Mammary epithelial cell (primary cell): ENCODE measurements at regions of chr6 and their contacts with region 1.

Region 1: DNA sequence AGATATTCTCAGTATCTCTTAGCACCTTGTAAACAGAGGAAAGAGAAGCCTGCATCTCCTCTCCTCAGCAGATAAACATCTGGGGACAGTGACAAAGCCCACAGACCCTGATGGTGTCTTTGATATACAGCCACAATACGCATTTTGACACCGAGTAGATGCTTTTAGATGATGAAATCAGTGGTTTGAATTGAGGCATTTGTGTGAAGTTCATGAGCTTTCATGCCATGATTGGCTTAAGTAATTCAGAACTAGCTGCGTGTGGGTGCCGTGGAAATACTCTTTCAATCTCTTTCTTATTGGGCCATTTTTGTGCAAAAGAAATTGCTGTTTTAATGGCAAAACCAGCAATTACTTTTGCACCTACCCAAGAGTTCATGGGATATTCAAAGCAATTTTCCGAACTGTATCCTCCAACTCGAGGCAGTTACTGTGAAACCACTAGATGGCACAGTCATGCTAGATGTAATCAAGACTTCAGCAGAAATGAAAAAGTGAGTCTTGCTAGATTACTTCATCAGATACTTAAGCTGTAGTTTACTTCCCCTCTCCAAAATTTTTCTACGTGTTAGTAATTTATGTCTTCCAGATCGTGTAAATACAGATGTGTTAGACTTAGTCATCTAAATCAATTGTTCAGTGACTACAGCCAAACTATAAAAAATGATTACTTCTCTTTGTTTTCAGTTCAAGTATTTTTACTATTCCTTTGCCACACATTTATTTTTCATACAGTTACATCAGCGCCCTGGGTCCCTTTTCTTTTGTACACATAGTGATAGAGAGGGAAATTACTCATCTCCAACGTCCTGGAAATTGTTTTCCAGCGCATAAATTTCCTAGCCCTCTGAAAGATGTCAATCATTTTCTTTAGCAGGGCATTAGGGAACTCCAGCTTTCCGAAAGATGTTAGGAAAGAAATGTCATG is 49.4 kb downstream of the IYD start:
- DNase-seq: peak; percentile 79
- H3K4me3 ChIP-seq: peak overlapping the region; percentile 24 to 51 (median 27)
- H3K27ac ChIP-seq: peak overlapping the region; percentile 69
- H3K4me1 ChIP-seq: peaks cover 5% of the 10 kb centered on the region
- H3K27me3 ChIP-seq: no peaks in the 10 kb centered on the region
- CTCF ChIP-seq: peak; percentile 85 to 93

Region 2: DNA sequence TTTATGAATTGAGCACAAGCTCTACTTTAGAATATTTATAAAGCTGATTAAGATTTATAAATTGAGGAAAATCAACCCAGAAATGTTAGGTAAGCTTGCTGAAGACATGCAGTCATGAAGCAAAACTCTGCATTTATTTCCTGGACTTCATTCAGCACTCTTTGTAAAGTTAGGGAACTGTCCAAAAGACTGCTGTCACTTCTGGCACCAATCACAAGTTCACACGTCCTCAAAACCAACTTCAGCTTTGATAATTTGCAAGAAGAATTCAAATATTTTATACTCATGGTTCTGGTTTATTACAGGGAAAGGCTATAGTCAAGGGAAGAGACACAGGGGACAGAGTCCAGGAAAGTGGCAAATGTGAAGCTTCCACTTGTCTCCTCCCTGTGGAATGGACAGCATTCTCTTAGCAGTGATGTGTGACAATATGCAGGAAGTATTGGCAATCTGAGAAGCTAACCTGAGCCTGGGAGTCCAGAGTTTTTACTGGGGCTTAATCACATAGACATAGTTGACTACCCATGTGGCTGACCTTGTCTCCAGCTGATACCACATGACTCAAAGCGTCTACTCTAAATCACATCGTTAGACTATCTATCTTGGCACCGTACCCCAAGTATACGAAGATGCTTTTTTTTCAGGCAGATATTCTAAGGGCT is 190.0 kb before region 1 on chr6:
- CTCF ChIA-PET with region 1: no interaction called
- dilution Hi-C with region 1: no loop called
- in situ Hi-C with region 1: no loop called
- intact Hi-C with region 1: no loop called
- DNase-seq: no peak
- H3K4me3 ChIP-seq: no peak overlapping the region
- H3K27ac ChIP-seq: no peak overlapping the region
- H3K4me1 ChIP-seq: peaks cover 38% of the 10 kb centered on the region
- H3K27me3 ChIP-seq: no peaks in the 10 kb centered on the region
- CTCF ChIP-seq: no peak

Region 3: GRCh38 chr6:150600301-150601017 is 182.3 kb after region 1 on chr6:
- CTCF ChIA-PET with region 1: interaction called, 6 read pairs
- dilution Hi-C with region 1: no loop called
- in situ Hi-C with region 1: loop called in 1 of 2 experiments (anchors 10 kb)
- intact Hi-C with region 1: loop called (anchors 1 kb)
- DNase-seq: peak; percentile 90
- H3K4me3 ChIP-seq: peak overlapping the region; percentile 69 to 81 (median 80)
- H3K27ac ChIP-seq: peak overlapping the region; percentile 47
- H3K4me1 ChIP-seq: peaks cover 15% of the 10 kb centered on the region
- H3K27me3 ChIP-seq: no peaks in the 10 kb centered on the region
- CTCF ChIP-seq: peak; percentile 53 to 79

Region 4: DNA sequence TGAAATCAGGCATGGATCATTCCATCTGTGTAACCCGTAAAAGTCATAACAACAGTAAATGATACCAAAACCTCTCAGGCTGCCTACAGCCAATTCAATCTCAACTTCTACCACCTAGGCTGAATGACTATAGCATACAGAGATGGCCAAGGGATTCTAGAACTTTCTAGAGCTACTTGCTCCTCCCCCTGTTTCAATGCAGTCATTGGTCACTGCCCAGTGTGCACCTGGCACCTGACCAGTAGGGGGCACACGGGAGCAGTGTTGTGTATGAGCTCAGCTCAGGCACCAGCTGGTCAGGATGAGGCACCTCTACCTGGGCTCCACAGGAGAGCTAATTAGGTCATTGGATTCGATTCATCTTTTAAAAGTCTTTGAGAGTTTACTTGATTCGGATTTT is 267.7 kb after region 1 on chr6:
- CTCF ChIA-PET with region 1: interaction called, 7 read pairs
- dilution Hi-C with region 1: no loop called
- in situ Hi-C with region 1: no loop called
- intact Hi-C with region 1: loop called (anchors 1 kb)
- DNase-seq: peak; percentile 72
- H3K4me3 ChIP-seq: no peak overlapping the region
- H3K27ac ChIP-seq: no peak overlapping the region
- H3K4me1 ChIP-seq: peaks cover 24% of the 10 kb centered on the region
- H3K27me3 ChIP-seq: no peaks in the 10 kb centered on the region
- CTCF ChIP-seq: peak; percentile 89 to 96

Region 5: DNA sequence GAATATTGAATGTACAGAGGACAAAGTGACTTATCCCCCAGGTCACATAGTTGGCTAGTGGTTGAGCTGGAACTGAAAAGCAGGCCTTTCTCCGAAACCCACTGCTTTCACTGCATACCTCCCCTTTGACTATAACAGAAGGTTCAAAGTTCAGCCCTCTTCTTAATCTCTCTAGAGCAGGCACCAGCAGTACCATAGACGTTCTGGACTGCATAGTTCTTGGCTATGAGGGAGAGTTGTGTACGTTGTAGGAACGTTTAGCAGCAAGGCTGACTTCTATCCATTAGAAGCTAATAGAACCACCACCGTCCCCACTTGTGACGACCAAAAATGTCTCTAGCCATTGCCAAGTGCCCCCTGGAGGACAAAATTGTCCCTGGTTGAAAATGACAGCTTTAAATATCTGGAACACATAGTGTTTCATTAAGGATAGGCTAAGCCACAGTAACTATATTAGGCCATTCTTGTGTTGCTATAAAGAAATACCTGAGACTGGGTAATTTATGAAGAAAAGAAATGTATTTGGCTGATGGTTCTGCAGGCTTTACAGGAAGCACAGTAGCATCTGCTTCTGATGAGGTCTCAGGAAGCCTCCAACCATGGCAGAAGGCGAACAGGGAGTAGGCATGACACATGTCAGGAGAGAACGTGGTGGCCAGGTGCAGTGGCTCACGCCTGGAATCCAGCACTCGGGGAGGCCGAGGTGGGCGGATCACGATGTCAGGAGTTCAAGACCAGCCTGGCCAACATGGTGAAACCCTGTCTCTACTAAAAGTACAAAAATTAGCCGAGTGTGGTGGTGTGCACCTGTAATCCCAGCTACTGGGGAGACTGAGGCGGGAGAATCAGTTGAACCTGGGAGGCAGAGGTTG is 323.7 kb after region 1 on chr6:
- CTCF ChIA-PET with region 1: interaction called, 3 read pairs
- dilution Hi-C with region 1: no loop called
- in situ Hi-C with region 1: no loop called
- intact Hi-C with region 1: loop called (anchors 2 kb)
- DNase-seq: no peak
- H3K4me3 ChIP-seq: no peak overlapping the region
- H3K27ac ChIP-seq: no peak overlapping the region
- H3K4me1 ChIP-seq: peaks cover 9% of the 10 kb centered on the region
- H3K27me3 ChIP-seq: no peaks in the 10 kb centered on the region
- CTCF ChIP-seq: peak; percentile 33 to 43

Region 6: DNA sequence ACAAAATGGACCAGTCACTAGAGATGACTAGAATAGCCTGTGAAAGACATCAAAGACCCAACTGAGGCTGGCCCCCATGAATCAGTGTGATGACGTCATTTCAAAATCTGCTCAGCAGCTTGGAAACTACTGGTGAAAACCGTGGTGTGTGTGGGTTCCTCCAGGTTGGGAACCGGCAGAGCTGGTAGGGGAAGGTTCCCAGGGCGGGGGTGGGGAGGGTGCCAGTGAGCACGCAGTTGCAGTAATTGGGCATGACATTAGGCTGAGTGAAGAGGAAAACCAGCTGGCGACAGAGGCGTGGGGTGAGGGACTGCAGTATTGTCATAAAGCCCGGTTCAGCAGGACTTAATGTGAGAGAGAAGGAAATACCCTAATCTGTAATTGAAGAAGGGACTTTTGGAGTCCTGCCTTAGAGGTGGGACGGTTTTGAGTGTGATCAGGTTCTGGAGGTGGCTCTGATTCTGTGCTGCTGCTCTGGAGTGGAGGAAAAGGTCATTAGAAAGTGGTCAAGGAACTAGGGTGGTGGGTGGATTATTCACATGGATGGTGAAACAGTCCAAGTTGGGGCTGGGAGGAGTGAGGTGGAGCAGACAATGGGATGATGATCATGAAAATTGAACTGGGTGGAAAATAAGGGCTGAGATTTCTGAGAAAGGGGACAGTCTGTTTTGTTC is 395.3 kb after region 1 on chr6:
- CTCF ChIA-PET with region 1: interaction called, 19 read pairs
- dilution Hi-C with region 1: no loop called
- in situ Hi-C with region 1: loop called (anchors 5 kb)
- intact Hi-C with region 1: loop called (anchors 1 kb)
- DNase-seq: peak; percentile 92
- H3K4me3 ChIP-seq: no peak overlapping the region
- H3K27ac ChIP-seq: peak overlapping the region; percentile 54
- H3K4me1 ChIP-seq: peaks cover 12% of the 10 kb centered on the region
- H3K27me3 ChIP-seq: no peaks in the 10 kb centered on the region
- CTCF ChIP-seq: no peak

Region 7: GRCh38 chr6:150891888-150892485 is 473.8 kb after region 1 on chr6:
- CTCF ChIA-PET with region 1: no interaction called
- dilution Hi-C with region 1: no loop called
- in situ Hi-C with region 1: no loop called
- intact Hi-C with region 1: loop called (anchors 5 kb)
- DNase-seq: peak; percentile 57
- H3K4me3 ChIP-seq: no peak overlapping the region
- H3K27ac ChIP-seq: no peak overlapping the region
- H3K4me1 ChIP-seq: peaks cover 7% of the 10 kb centered on the region
- H3K27me3 ChIP-seq: no peaks in the 10 kb centered on the region
- CTCF ChIP-seq: peak; percentile 84 to 90